ENCODE measurements at regions of chr7 and their contacts with region 1.

Region 1: DNA sequence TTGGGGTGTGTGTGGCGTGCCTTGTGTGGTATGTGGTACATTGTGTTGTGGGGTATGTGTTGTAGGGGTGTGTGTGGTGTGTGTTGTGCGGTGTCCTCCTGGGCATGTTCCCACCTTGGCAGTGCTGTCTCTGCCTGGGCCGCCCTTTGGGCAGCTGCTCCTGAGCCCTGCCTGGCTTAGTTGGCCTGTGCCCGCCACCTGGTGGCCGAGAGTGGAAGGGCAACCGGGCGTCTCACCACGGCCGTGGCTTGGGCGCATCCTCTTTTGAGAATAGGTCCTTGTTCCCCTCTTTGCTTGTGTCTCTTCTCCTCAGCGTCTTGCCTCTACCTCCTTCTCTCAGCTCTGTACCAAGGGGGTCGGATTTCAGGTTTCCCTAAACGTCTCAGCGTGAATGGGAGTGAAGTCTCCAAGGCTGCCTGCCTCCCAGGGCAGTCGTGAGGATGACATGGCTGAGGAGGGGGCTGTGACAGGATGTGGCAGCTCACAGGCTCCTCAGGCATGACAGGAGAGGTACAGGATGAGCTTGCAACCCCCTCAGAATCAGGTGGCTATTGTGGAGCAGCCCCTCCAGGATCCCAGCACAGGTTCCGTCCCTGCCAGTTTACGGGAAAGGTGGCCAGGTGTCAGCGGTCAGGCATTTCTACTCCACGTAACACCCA is 98.4 kb upstream of the PODXL start:
- DNase-seq: peak; percentile 66 to 96 (median 90)

Region 2: GRCh38 chr7:131090886-131091692 is 563.7 kb before region 1 on chr7:
- intact Hi-C with region 1: loop called (anchors 10 kb)
- DNase-seq: no peak

Region 3: GRCh38 chr7:131507592-131508331 is 147.0 kb before region 1 on chr7:
- intact Hi-C with region 1: loop called (anchors 2 kb)
- DNase-seq: peak; percentile 84 to 95 (median 91)

Region 4: DNA sequence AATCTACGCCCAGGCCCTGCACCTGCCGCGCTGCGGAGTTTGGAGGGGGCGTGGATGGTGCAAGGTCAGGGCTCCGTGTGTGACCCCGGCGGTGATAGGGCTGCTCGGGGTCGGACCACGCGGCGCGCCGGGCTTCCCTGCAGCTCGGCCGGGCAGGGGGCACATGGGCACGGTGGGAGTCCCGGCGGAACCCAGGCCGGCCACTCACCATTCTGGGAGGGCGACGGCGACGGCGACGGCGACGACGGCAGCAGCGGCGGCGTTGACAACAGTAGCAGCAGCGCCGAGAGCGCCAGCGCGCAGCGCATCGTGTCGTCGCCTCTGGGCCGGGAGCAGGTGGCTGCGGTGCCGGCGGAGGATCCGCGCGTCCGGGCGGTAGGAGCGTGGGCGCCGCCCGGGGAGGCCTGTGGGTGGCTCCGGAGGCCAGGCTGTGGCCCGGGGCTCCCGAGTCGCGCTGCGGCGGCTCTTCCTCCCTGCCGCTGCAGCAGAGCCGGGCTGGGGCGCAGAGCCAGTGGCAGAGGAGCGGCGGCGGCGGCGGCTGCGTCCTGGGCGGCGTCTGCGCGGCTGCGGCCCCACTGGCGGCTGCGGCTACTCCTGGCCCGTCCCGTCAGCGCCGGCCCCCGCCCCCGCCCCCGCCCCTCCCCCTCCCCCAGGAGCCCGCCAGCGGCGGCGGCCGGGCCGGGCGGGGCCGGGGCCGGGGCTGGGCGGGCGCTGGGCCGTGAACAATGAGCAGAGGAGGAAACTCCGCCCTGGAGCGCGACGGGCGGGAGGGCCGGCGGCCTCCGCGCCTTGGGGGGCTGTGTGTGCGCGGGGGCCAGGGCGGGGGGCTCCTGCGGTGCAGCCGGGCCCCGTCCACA is 98.5 kb before region 1 on chr7 and contains the start of gene PODXL:
- intact Hi-C with region 1: loop called (anchors 10 kb)
- DNase-seq: peak; percentile 9 to 87 (median 66)

Measured in head of caudate nucleus (tissue), 42 donors.